ENCODE measurements at regions of chr19 and their contacts with region 1.

Region 1: GRCh38 chr19:16714702-16715287 is 4.9 kb upstream of the NWD1 start:
- DNase-seq: peak; percentile 68
- H3K4me3 ChIP-seq: no peak overlapping the region; a peak in 1 of 4 replicates
- H3K27ac ChIP-seq: no peak overlapping the region
- H3K4me1 ChIP-seq: peaks cover 0 to under 1% of the 10 kb centered on the region in 2 experiments; a peak in 1 of 4 replicates
- H3K27me3 ChIP-seq: no peaks in the 10 kb centered on the region
- CTCF ChIP-seq: peak; percentile 82
- EP300 ChIP-seq: no peak
- RAD21 ChIP-seq: peak; percentile 76

Region 2: DNA sequence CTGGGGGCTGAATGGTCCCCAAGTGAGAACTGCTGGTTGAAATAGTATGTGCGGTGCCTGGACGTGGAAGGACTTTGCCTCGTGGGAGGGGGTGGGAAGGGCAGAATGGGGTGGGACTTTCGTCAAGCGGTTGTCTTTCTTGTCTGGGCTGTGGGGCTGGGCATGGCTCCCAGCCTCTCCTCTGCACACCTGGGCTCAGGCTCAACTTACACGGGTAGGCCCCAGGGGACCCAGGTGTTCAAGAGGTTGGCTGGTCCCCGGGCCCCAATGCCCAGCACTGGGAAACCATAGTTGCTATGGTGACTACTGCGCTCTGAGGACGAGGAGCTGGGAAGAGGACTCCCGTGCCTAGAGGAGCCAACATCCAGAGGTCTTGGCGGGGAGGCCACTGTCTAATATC is 12.1 kb after region 1 on chr19:
- CTCF ChIA-PET with region 1: interaction called, 13 read pairs
- POLR2A ChIA-PET with region 1: no interaction called
- DNase-seq: no peak
- H3K4me3 ChIP-seq: no peak overlapping the region
- H3K27ac ChIP-seq: no peak overlapping the region
- H3K4me1 ChIP-seq: no peaks in the 10 kb centered on the region
- H3K27me3 ChIP-seq: no peaks in the 10 kb centered on the region
- CTCF ChIP-seq: no peak
- EP300 ChIP-seq: no peak
- RAD21 ChIP-seq: no peak